T-cell (primary cell): ENCODE measurements at regions of chr3 and their contacts with region 1.

Region 1: DNA sequence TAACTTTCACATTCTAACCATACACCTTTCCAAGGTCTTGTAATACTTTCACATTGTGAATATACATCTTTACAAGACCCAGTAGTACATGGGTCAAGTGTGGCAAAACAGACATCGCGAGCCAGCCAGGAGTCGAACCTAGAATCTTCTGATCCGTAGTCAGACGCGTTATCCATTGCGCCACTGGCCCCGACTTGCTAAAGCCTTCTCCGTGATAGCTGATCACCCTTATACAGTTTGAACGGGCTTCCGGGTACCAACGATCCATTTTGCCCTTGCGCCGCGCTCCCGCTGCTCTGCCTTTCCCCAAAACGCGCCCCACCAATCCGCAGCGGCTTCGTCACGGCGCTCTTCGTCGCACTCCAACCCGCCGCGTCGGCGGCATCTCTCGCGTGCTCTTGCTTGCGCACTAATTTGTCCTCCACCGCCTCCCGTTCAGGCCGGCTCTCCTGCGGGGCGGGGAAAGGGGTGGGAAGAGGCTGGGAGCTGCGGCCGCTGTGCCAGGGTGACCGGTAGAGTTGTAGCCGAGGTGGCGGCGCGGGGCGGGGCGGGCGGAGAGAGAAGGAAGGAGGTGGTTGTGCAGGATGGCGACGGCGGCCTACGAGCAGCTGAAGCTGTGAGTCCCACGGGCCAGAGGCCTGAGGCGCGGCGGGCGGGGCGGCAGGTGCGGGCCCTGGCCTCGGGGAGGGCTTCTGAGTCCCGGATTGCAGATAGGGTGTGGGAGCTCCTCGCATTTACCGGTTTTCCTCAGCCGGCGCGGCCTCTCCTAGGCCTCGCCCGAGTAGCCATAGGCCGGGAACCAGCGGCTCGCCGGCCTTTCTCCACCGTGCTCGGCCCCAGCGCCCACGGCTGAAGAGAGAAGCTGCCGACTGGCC is at the start of gene SACM1L:
- DNase-seq: peak; percentile 93 to 99 (median 95)
- ATAC-seq: peak; percentile 88 to 92 (median 89)
- H3K4me3 ChIP-seq: peak within 1 kb of the TSS; percentile 82 to 92
- H3K4me3 Mint-ChIP-seq: peak within 1 kb of the TSS; percentile 73 to 89 (median 89)
- H3K27ac ChIP-seq: peak within 1 kb of the TSS; percentile 96
- H3K27ac Mint-ChIP-seq: peak within 1 kb of the TSS; percentile 98 to 99
- H3K4me1 ChIP-seq: peaks cover 36 to 42% of the 10 kb centered on the region in 2 experiments
- H3K4me1 Mint-ChIP-seq: peaks cover 64 to 65% (median 64%) of the 10 kb centered on the region in 3 donors
- H3K27me3 ChIP-seq: no peaks in the 10 kb centered on the region
- H3K27me3 Mint-ChIP-seq: peaks cover 3% of the 10 kb centered on the region in 2 donors
- total RNA-seq, gene SACM1L: 62.8 to 81.5 (median 69.1) TPM

Region 2: DNA sequence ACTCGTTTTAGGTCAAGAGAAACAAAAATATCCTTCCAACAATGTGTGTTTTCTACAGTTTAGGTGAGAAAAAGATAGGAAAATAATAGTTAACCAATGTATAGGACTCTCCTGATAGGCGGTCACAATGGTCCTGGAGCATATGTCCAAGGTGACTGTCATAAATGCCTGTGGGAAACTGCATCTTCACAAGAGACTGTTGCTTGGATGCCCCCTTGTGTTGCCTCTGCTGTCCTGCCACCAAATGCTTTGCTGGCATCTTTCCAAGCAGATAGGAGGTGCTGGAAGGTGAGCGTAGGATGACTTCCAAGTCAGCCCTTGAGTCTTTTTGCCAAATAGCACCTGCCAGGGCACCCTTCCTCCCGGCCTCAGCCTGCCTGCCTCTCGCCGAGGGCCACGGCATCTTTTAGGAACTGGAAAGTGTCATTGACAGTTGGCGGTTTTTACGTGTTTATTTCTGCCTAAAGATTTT is 24.0 kb before region 1 on chr3:
- CTCF ChIA-PET with region 1: interaction called in 1 of 2 experiments, 22 read pairs
- POLR2A ChIA-PET with region 1: interaction called, 5 to 7 read pairs
- DNase-seq: peak; percentile 20 to 87 (median 56)
- ATAC-seq: peak; percentile 53 to 61 (median 58)
- H3K4me3 ChIP-seq: peak overlapping the region; percentile 44 to 66
- H3K4me3 Mint-ChIP-seq: peak overlapping the region; percentile 87 to 92 (median 89)
- H3K27ac ChIP-seq: peak overlapping the region; percentile 80
- H3K27ac Mint-ChIP-seq: peak overlapping the region; percentile 93 to 94
- H3K4me1 ChIP-seq: peaks cover 7 to 27% of the 10 kb centered on the region in 2 experiments
- H3K4me1 Mint-ChIP-seq: peaks cover 28 to 43% (median 34%) of the 10 kb centered on the region in 3 donors
- H3K27me3 ChIP-seq: no peaks in the 10 kb centered on the region
- H3K27me3 Mint-ChIP-seq: no peaks in the 10 kb centered on the region

Region 3: DNA sequence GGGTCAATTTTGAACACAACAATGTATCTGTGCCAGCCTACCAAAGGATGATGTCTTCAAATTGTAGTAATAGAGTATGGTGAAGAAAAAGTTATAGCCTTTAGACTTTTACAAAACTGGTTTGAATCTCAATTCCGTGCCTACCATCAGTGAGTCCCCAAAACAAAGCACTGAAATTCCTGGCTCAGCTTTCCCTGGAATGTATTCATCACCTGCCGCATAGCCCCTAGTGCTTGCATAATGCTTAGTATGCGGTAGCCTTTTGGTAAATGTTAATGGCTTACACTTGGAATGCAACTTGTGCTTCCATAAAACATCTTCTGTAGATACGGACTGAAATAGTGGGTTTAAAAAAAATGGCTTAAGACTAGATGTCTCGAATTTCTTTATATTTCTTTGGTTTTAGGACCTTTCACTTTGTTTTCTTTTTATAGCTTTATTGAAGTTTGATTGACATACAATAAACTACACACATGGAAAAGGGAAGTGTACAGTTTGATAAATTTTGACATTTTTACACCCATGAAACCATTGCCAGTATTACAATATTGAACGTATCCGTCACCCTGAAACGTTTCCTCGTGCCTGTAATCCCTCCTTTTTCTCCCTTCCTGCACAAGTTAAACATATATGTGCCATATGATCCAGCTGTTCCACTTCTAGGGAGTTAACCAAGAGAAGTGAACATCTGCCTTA is 12.2 kb after region 1 on chr3:
- CTCF ChIA-PET with region 1: interaction called in 1 of 2 experiments, 14 read pairs
- POLR2A ChIA-PET with region 1: interaction called, 3 to 4 read pairs
- DNase-seq: no peak
- ATAC-seq: no peak
- H3K4me3 ChIP-seq: no peak overlapping the region
- H3K4me3 Mint-ChIP-seq: no peak overlapping the region
- H3K27ac ChIP-seq: no peak overlapping the region
- H3K27ac Mint-ChIP-seq: peak overlapping the region in 1 of 2 donors; percentile 1
- H3K4me1 ChIP-seq: peaks cover 11 to 16% of the 10 kb centered on the region in 2 experiments
- H3K4me1 Mint-ChIP-seq: peaks cover 67 to 70% (median 67%) of the 10 kb centered on the region in 3 donors
- H3K27me3 ChIP-seq: no peaks in the 10 kb centered on the region
- H3K27me3 Mint-ChIP-seq: no peaks in the 10 kb centered on the region